H1 (cell line): ENCODE measurements at regions of chr3 and their contacts with region 1.

Region 1: DNA sequence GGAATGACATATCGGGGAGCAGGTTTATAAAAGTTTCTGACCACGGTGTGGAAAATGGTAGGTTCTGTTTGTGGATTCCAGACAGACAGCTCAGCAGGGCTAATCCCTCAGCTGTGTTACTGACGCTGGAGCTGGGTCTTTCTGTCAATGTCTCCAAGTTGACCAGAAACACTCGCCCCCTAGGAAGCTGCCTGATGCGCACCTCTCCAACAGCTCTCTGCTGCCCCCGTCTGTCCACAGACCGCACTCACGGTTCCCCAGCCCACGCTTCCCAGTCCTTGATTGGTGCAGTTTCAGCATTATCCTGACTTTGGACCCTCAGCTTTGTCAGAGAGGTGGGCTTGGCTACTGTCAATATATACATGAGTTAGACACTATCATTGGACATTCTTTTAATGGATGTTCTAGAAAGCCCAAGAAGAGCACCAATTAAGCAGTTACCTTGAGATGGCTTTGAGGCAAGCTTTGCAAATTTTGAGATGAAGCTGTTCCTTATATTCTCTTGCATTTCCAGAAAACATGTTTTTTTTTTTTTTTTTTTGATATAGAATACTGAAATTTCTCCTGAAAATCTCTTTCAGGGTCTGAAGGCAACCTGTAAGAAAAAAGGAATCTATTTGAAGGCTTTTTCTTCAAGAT is 98.9 kb upstream of the TBC1D5 start:
- DNase-seq: peak; percentile 58 to 97
- H3K4me3 ChIP-seq: no peak overlapping the region
- H3K27ac ChIP-seq: no peak overlapping the region
- H3K4me1 ChIP-seq: no peaks in the 10 kb centered on the region
- H3K27me3 ChIP-seq: no peaks in the 10 kb centered on the region
- CTCF ChIP-seq: peak; percentile 97 to 100 (median 99)
- EP300 ChIP-seq: no peak
- POLR2A ChIP-seq: no peak
- RAD21 ChIP-seq: peak; percentile 98 to 99

Region 2: GRCh38 chr3:17518189-17519059 is 322.9 kb before region 1 on chr3:
- CTCF ChIA-PET with region 1: interaction called, 10 read pairs
- POLR2A ChIA-PET with region 1: no interaction called
- DNase-seq: peak in 1 of 2 experiments; percentile 52
- H3K4me3 ChIP-seq: no peak overlapping the region
- H3K27ac ChIP-seq: no peak overlapping the region
- H3K4me1 ChIP-seq: peaks cover 2 to 7% (median 4%) of the 10 kb centered on the region in 4 experiments; a peak in 5 of 7 replicates
- H3K27me3 ChIP-seq: no peaks in the 10 kb centered on the region
- CTCF ChIP-seq: no peak
- EP300 ChIP-seq: no peak
- POLR2A ChIP-seq: no peak
- RAD21 ChIP-seq: no peak

Region 3: GRCh38 chr3:17686613-17687012 is 154.7 kb before region 1 on chr3:
- CTCF ChIA-PET with region 1: interaction called, 10 read pairs
- POLR2A ChIA-PET with region 1: no interaction called
- DNase-seq: no peak
- H3K4me3 ChIP-seq: no peak overlapping the region
- H3K27ac ChIP-seq: no peak overlapping the region
- H3K4me1 ChIP-seq: no peaks in the 10 kb centered on the region; a peak in 1 of 7 replicates
- H3K27me3 ChIP-seq: no peaks in the 10 kb centered on the region
- CTCF ChIP-seq: peak in 2 of 3 experiments; percentile 49 to 61; a peak in 3 of 4 replicates
- EP300 ChIP-seq: no peak
- POLR2A ChIP-seq: no peak
- RAD21 ChIP-seq: peak; percentile 76 to 78

Region 4: GRCh38 chr3:17802821-17803392 is 38.4 kb before region 1 on chr3:
- CTCF ChIA-PET with region 1: interaction called, 36 read pairs
- POLR2A ChIA-PET with region 1: no interaction called
- DNase-seq: no peak
- H3K4me3 ChIP-seq: no peak overlapping the region
- H3K27ac ChIP-seq: no peak overlapping the region
- H3K4me1 ChIP-seq: no peaks in the 10 kb centered on the region
- H3K27me3 ChIP-seq: no peaks in the 10 kb centered on the region
- CTCF ChIP-seq: no peak
- EP300 ChIP-seq: no peak
- POLR2A ChIP-seq: no peak
- RAD21 ChIP-seq: peak; percentile 12 to 15; a peak in 1 of 4 replicates

Region 5: GRCh38 chr3:17894434-17895060 is 53.2 kb after region 1 on chr3:
- CTCF ChIA-PET with region 1: interaction called, 13 read pairs
- POLR2A ChIA-PET with region 1: no interaction called
- DNase-seq: peak; percentile 47 to 79
- H3K4me3 ChIP-seq: no peak overlapping the region
- H3K27ac ChIP-seq: no peak overlapping the region
- H3K4me1 ChIP-seq: no peaks in the 10 kb centered on the region; a peak in 1 of 7 replicates
- H3K27me3 ChIP-seq: no peaks in the 10 kb centered on the region
- CTCF ChIP-seq: peak; percentile 10 to 81 (median 77)
- EP300 ChIP-seq: no peak
- POLR2A ChIP-seq: no peak
- RAD21 ChIP-seq: peak; percentile 95 to 98